ENCODE measurements at regions of chr2 and their contacts with region 1.

Region 1: GRCh38 chr2:118539290-118539689 is 308.2 kb downstream of the EN1 start:
- DNase-seq: peak in 1 of 2 donors; percentile 47
- ATAC-seq: no peak
- H3K4me3 ChIP-seq: no peak overlapping the region
- H3K27ac ChIP-seq: no peak overlapping the region
- H3K4me1 ChIP-seq: no peaks in the 10 kb centered on the region
- H3K27me3 ChIP-seq: no peaks in the 10 kb centered on the region

Region 2: GRCh38 chr2:118855451-118856279 is 316.4 kb after region 1 on chr2:
- intact Hi-C with region 1: loop called in 1 of 2 experiments (anchors 10 kb)
- DNase-seq: peak; percentile 83 to 95
- ATAC-seq: peak; percentile 85
- H3K4me3 ChIP-seq: no peak overlapping the region
- H3K27ac ChIP-seq: no peak overlapping the region
- H3K4me1 ChIP-seq: no peaks in the 10 kb centered on the region
- H3K27me3 ChIP-seq: no peaks in the 10 kb centered on the region

Measured in aorta (tissue), 5 donors.